Common myeloid progenitor, CD34-positive (primary cell): ENCODE measurements at regions of chr12 and their contacts with region 1.

Region 1: DNA sequence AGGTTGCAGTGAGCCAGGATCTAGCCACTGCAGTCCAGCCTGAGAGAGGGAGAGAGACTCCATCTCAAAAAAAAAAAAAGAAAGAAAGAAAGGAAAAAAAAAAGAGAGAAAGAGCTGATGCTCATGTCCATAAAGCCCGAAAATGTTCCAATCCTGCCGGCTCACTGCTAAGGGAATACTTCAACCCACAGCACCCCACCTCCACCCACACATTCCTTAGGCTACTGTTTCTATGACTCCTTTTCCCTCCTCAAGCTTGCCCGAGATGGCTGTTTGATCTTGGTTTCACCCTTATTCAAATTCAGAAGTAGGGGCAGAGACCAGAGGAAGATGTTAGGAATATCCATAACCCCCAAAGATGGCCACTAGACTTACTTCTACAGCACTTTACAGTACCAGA is 59.5 kb upstream of the RASSF3 start:
- DNase-seq: no peak
- H3K4me3 ChIP-seq: no peak overlapping the region
- H3K27ac ChIP-seq: no peak overlapping the region
- H3K4me1 ChIP-seq: no peaks in the 10 kb centered on the region
- H3K27me3 ChIP-seq: no peaks in the 10 kb centered on the region

Region 2: DNA sequence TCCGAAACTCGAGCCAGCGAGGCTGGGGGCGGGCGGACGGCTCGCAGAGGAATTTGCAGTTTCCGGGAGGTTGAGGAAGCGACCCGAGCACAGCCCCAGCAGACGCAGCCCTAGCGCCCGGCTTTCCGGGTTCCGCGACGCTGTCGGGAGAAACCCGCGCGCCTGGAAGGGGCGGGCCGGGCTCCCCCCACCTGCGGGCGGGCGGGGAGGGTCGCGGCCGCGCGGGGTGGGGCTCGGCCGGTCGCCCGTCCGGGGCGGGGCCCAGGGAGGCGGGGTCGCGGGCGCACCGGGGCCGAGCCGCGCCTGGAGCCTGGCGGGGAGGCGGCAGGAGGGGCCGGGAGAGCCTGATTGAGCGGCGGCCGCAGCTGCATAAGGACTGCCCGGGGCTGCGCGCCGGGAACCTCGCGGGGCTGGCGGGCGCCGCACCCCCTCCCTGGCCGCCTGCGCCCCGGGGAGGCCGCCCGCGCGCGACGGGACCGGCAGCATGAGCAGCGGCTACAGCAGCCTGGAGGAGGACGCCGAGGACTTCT is 59.5 kb after region 1 on chr12 and contains the start of gene RASSF3:
- CTCF ChIA-PET with region 1: interaction called, 10 read pairs
- POLR2A ChIA-PET with region 1: no interaction called
- DNase-seq: peak in 2 of 3 donors; percentile 65 to 73
- H3K4me3 ChIP-seq: peak within 1 kb of the TSS; percentile 81 to 97 (median 87)
- H3K27ac ChIP-seq: peak within 1 kb of the TSS in 1 of 2 experiments; percentile 81
- H3K4me1 ChIP-seq: peaks cover 15 to 50% (median 36%) of the 10 kb centered on the region in 4 experiments
- H3K27me3 ChIP-seq: no peaks in the 10 kb centered on the region

Region 3: GRCh38 chr12:64706306-64706705 is 155.6 kb after region 1 on chr12:
- CTCF ChIA-PET with region 1: interaction called, 11 read pairs
- POLR2A ChIA-PET with region 1: no interaction called
- DNase-seq: no peak
- H3K4me3 ChIP-seq: no peak overlapping the region
- H3K27ac ChIP-seq: no peak overlapping the region
- H3K4me1 ChIP-seq: no peaks in the 10 kb centered on the region
- H3K27me3 ChIP-seq: no peaks in the 10 kb centered on the region